HepG2 (cell line): ENCODE measurements at regions of chr2 and their contacts with region 1.

Region 1: GRCh38 chr2:85538486-85539360 is at the start of gene MAT2A:
- DNase-seq: peak; percentile 91
- ATAC-seq: peak; percentile 83
- H3K4me3 ChIP-seq: peak within 1 kb of the TSS; percentile 81 to 96 (median 95)
- H3K27ac ChIP-seq: peak within 1 kb of the TSS; percentile 99
- H3K4me1 ChIP-seq: peaks cover 44% of the 10 kb centered on the region
- H3K27me3 ChIP-seq: no peaks in the 10 kb centered on the region; a peak in 1 of 5 replicates
- CTCF ChIP-seq: peak; percentile 97
- EP300 ChIP-seq: peak; percentile 3 to 58; a peak in 1 of 4 replicates
- POLR2A ChIP-seq: peak; percentile 99 to 100
- RAD21 ChIP-seq: peak; percentile 86
- total RNA-seq, gene MAT2A: 55.8 and 155 TPM in 2 replicates

Region 2: DNA sequence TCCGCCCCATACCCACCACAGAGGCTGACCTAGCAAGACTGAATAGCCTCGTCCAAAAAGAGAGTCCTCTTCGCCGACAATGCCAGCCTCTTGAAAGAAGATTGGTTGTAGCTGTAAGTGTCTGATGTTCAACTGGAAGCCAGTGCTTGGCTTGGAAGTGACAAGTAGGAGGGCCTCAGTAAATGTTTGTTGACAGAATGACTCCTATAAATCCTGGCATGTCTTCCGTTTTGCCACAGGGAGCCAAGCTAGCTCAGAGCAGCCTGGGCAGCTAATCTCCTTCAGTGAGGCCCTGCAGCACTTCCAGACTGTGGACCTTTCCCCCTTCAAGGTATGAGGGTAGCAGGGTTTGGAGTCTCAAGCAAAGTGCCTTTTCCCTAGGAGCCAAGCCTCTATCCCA is 169.2 kb before region 1 on chr2:
- CTCF ChIA-PET with region 1: no interaction called
- POLR2A ChIA-PET with region 1: interaction called, 19 read pairs
- in situ Hi-C with region 1: no loop called
- intact Hi-C with region 1: no loop called
- DNase-seq: no peak
- ATAC-seq: no peak
- H3K4me3 ChIP-seq: no peak overlapping the region
- H3K27ac ChIP-seq: no peak overlapping the region
- H3K4me1 ChIP-seq: peaks cover 48% of the 10 kb centered on the region
- H3K27me3 ChIP-seq: no peaks in the 10 kb centered on the region
- CTCF ChIP-seq: no peak
- EP300 ChIP-seq: no peak
- POLR2A ChIP-seq: no peak
- RAD21 ChIP-seq: no peak

Region 3: GRCh38 chr2:85420536-85421259 is 118.0 kb before region 1 on chr2:
- CTCF ChIA-PET with region 1: interaction called, 25 read pairs
- POLR2A ChIA-PET with region 1: interaction called, 363 read pairs
- in situ Hi-C with region 1: no loop called
- intact Hi-C with region 1: loop called (anchors 1 kb)
- DNase-seq: peak; percentile 90
- ATAC-seq: peak; percentile 66
- H3K4me3 ChIP-seq: peak overlapping the region; percentile 41 to 97 (median 91)
- H3K27ac ChIP-seq: peak overlapping the region; percentile 83
- H3K4me1 ChIP-seq: peaks cover 58% of the 10 kb centered on the region
- H3K27me3 ChIP-seq: no peaks in the 10 kb centered on the region
- CTCF ChIP-seq: peak; percentile 100; the same call in 1 of the 2 replicates
- EP300 ChIP-seq: peak; percentile 46 to 74; a peak in 2 of 4 replicates
- POLR2A ChIP-seq: no peak
- RAD21 ChIP-seq: peak; percentile 100

Region 4: DNA sequence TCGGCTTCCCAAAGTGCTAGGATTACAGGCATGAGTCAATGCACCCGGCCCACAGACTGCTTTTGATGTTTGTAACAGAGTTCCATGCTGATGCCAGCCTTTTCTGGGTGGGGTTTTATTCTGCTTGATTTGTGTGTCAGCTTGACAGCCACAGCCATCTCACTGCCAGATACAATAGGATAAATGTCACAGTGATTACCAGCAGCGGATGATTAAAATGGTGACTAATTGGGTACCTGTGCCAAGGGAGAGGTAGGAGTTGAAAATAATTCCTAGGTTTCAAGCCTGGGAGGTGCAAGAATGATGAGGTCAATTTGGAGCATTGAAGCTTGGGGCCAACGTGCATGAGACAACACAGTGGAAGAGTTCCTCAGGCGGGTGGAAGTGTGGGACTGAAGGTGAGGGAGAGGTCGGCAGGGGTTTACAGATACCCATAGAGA is 80.8 kb before region 1 on chr2:
- CTCF ChIA-PET with region 1: no interaction called
- POLR2A ChIA-PET with region 1: interaction called, 42 read pairs
- in situ Hi-C with region 1: no loop called
- intact Hi-C with region 1: no loop called
- DNase-seq: no peak
- ATAC-seq: no peak
- H3K4me3 ChIP-seq: no peak overlapping the region
- H3K27ac ChIP-seq: no peak overlapping the region
- H3K4me1 ChIP-seq: peaks cover 52% of the 10 kb centered on the region
- H3K27me3 ChIP-seq: peaks cover 3 to 20% of the 10 kb centered on the region in 2 experiments; a peak in 4 of 5 replicates
- CTCF ChIP-seq: no peak
- EP300 ChIP-seq: no peak
- POLR2A ChIP-seq: no peak
- RAD21 ChIP-seq: no peak

Region 5: GRCh38 chr2:85516653-85517406 is 21.9 kb before region 1 on chr2:
- CTCF ChIA-PET with region 1: no interaction called
- POLR2A ChIA-PET with region 1: interaction called, 55 read pairs
- in situ Hi-C with region 1: no loop called
- intact Hi-C with region 1: no loop called
- DNase-seq: peak; percentile 63
- ATAC-seq: peak; percentile 89
- H3K4me3 ChIP-seq: no peak overlapping the region
- H3K27ac ChIP-seq: no peak overlapping the region
- H3K4me1 ChIP-seq: peaks cover 37% of the 10 kb centered on the region
- H3K27me3 ChIP-seq: peaks cover 0 to 3% of the 10 kb centered on the region in 2 experiments; a peak in 2 of 5 replicates
- CTCF ChIP-seq: no peak
- EP300 ChIP-seq: peak in 1 of 2 experiments; percentile 64; a peak in 2 of 4 replicates
- POLR2A ChIP-seq: no peak
- RAD21 ChIP-seq: no peak

Region 6: DNA sequence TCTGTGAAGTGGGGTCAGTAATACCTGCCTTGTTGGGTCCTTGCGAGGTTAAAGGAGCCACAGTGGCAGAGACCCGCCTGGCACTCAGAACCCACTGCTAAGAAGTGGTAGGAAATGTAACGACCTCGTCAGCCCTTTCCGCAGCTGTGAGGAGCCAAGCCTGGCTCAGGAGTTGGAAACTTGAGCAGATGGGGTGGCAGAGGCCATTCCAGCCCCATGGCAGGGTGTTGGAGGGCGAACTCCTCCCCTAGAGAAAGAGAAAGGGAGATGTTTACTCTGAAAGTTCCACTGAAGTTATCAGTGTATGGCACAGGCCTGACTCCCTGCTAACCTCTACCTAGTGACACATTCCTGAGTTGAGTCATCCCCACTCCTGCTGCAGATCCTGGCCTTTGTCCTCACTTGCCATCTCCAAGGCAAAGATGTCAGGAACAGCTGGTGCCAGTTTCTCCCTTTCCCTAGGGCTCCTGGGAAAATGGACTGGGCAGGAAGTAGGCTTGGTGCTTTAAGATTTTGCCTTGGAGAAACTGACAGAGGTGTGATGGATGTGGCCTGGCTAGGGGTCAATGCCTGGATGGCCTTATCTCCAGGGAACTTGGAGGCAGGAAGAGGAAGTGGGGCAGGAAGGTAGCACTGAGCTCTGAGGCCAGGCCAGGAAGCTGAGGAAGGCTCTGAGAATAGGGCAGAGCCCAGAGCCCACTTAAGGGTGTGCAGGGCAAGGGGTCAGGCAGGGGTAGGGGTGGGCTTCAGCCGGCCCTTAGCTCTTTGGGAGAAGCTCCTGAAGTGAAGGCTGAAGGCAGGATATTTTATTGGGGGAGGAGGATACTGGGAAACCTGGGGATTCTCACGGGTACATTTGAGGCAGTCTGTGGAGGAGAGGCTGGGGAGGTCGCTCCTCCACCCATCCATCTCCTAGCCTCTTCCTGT is 46.4 kb after region 1 on chr2:
- CTCF ChIA-PET with region 1: no interaction called
- POLR2A ChIA-PET with region 1: interaction called, 13 read pairs
- in situ Hi-C with region 1: no loop called
- intact Hi-C with region 1: no loop called
- DNase-seq: peak; percentile 96
- ATAC-seq: peak; percentile 88
- H3K4me3 ChIP-seq: peak overlapping the region; percentile 64 to 83 (median 65)
- H3K27ac ChIP-seq: peak overlapping the region; percentile 99
- H3K4me1 ChIP-seq: peaks cover 80% of the 10 kb centered on the region
- H3K27me3 ChIP-seq: no peaks in the 10 kb centered on the region
- CTCF ChIP-seq: no peak
- EP300 ChIP-seq: peak in 1 of 2 experiments; percentile 82; a peak in 2 of 4 replicates
- POLR2A ChIP-seq: peak; percentile 59 to 70; a peak in 3 of 4 replicates
- RAD21 ChIP-seq: no peak

Region 7: DNA sequence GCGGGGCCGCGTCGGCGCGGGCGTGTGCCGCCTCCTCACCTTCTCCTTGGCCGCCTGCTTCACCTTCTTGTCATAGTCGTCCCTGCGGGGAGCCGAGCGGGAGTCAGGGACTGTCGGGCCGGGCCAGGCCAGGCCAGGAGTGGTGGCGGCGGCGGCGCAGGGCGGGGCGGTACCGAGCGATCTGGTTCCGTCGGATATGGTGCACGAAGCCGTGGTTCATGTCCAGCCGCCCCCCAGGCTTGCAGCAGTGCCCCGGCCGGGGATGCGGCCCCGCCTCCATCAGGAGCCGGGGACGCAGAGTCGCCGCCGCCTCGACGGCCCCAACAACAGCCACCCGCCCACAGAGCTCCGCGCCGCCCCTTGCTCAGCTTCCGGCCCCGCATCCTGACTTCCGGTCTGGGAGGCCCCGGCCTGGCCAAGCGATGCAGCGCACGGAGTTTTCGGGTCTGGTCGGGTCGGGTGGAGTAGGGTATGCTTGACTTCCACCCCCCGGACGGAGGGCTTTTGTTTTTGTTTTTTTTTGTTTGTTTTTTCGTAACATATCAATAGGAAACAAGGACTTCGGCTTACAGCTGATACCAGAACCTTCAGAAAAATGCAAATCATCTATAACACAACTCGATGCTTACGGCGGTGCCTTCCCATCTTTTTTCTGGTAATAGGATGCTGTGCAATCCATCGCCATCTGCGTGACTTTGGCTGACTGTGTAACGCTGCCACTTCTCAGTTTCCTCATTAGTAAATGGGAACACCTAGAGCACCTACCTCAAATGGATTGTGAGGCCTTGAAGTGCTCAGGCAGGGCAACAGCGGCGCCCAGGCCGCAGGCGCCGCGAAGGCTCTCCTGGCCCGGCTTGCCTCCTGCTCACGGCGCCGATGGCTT is 73.2 kb after region 1 on chr2 and contains the start of gene C2orf68:
- CTCF ChIA-PET with region 1: no interaction called
- POLR2A ChIA-PET with region 1: interaction called, 50 read pairs
- in situ Hi-C with region 1: no loop called
- intact Hi-C with region 1: no loop called
- DNase-seq: peak; percentile 86
- ATAC-seq: peak; percentile 85
- H3K4me3 ChIP-seq: peak within 1 kb of the TSS; percentile 92 to 100 (median 95)
- H3K27ac ChIP-seq: peak within 1 kb of the TSS; percentile 58
- H3K4me1 ChIP-seq: peaks cover 69% of the 10 kb centered on the region
- H3K27me3 ChIP-seq: no peaks in the 10 kb centered on the region; a peak in 1 of 5 replicates
- CTCF ChIP-seq: no peak
- EP300 ChIP-seq: no peak
- POLR2A ChIP-seq: peak; percentile 52 to 90; a peak in 3 of 4 replicates
- RAD21 ChIP-seq: peak; percentile 63
- total RNA-seq, gene C2orf68: 47.1 and 49.0 TPM in 2 replicates

Region 8: DNA sequence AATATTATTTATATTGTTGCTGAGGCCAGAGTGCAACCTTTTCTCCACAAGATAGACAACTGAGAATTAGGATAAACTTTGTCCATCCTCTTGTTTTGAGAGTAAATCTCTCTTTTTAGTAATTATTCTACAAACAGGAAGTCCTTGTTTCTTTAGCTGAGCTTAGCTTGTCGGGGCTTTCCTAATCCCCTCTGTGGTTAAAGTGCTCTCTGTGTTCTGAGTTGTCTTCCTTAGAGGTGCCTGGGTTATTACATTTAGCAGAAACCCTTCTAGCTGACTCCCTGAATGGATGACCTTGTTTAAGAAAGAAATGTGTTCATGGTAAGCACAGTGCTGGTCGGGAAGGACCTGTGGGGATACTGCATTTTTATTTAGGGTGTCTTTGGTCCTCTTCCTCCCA is 89.9 kb after region 1 on chr2:
- CTCF ChIA-PET with region 1: no interaction called
- POLR2A ChIA-PET with region 1: no interaction called
- in situ Hi-C with region 1: no loop called
- intact Hi-C with region 1: no loop called
- DNase-seq: no peak
- ATAC-seq: no peak
- H3K4me3 ChIP-seq: no peak overlapping the region
- H3K27ac ChIP-seq: no peak overlapping the region
- H3K4me1 ChIP-seq: no peaks in the 10 kb centered on the region
- H3K27me3 ChIP-seq: no peaks in the 10 kb centered on the region
- CTCF ChIP-seq: no peak
- EP300 ChIP-seq: no peak
- POLR2A ChIP-seq: no peak
- RAD21 ChIP-seq: no peak